PC-9 (cell line): ENCODE measurements at regions of chr2 and their contacts with region 1.

Region 1: GRCh38 chr2:215288112-215288815 is 23.6 kb upstream of the ATIC start:
- DNase-seq: no peak
- H3K4me3 ChIP-seq: no peak overlapping the region
- H3K27ac ChIP-seq: no peak overlapping the region
- H3K4me1 ChIP-seq: 0 out of 2 replicates have a peak, but pooled peaks cover 8% of the 10 kb centered on the region
- H3K27me3 ChIP-seq: no peaks in the 10 kb centered on the region
- CTCF ChIP-seq: no peak

Region 2: DNA sequence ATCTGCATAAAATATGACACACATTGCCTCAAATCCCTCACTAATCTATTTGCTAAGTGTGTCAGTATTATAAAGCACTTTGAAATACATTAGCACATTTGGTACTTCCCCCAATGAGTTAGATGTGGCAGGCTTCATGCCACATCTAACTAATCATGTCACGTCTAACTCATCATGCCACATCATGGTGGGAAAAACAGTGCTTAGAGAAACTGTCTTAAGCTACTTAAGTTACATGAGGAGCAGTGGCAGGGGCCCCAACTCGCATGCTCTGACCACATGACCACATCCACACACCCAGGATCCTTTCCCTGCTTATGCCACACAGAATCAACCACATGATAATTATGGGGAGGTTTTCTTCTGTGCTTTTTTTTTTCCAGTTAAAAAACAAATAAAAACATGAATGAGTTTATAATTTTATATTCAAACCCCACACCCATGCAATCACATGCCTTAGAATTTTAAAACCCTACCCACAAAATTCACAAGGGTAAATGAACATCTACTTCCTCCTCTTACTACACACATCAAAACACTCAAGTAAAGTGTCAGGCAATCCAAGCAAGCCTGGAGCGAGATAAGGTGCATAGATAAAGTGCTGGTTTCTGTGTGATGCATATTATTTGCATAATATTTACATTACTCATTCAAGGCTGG is 151.5 kb before region 1 on chr2:
- CTCF ChIA-PET with region 1: no interaction called
- POLR2A ChIA-PET with region 1: no interaction called
- intact Hi-C with region 1: no loop called
- DNase-seq: peak in 1 of 2 experiments; percentile 88
- H3K4me3 ChIP-seq: peak overlapping the region; percentile 2; the same call in 1 of the 2 replicates
- H3K27ac ChIP-seq: peak overlapping the region; percentile 81
- H3K4me1 ChIP-seq: peaks cover 30% of the 10 kb centered on the region
- H3K27me3 ChIP-seq: no peaks in the 10 kb centered on the region
- CTCF ChIP-seq: no peak

Region 3: DNA sequence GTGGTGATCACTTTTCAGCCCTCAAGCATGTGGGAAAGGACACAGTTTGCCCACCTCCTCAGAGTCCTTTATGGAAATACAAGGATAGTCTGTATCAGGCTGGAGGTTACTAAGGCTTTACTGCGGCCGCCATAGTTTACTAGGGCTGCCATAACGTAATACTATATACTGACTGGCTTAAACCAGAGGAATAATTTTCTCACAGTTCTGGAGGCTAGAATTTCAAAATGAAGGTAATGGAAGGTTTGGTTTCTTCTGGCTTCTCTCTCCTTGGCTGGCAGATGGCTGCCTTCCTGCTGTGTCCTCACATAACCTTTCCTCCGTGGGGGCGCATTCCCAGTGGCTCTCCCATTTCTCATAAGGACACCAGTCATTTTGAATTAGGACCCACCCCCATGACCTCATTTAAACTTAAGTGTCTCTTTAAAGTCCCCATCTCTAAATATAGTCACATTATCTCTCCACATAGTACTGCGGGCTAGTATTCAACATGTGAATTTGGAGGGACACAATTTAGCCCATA is 11.1 kb after region 1 on chr2:
- CTCF ChIA-PET with region 1: no interaction called
- POLR2A ChIA-PET with region 1: interaction called, 19 read pairs
- intact Hi-C with region 1: no loop called
- DNase-seq: no peak
- H3K4me3 ChIP-seq: no peak overlapping the region
- H3K27ac ChIP-seq: no peak overlapping the region
- H3K4me1 ChIP-seq: no peaks in the 10 kb centered on the region
- H3K27me3 ChIP-seq: no peaks in the 10 kb centered on the region
- CTCF ChIP-seq: no peak

Region 4: GRCh38 chr2:215324811-215325210 is 36.5 kb after region 1 on chr2:
- CTCF ChIA-PET with region 1: no interaction called
- POLR2A ChIA-PET with region 1: no interaction called
- intact Hi-C with region 1: no loop called
- DNase-seq: no peak
- H3K4me3 ChIP-seq: no peak overlapping the region
- H3K27ac ChIP-seq: 0 out of 2 replicates have a peak overlapping the region, but pooled peaks have one; percentile 6
- H3K4me1 ChIP-seq: peaks cover 17% of the 10 kb centered on the region
- H3K27me3 ChIP-seq: no peaks in the 10 kb centered on the region
- CTCF ChIP-seq: no peak